CD4-positive, alpha-beta T cell (primary cell): ENCODE measurements at regions of chr10 and their contacts with region 1.

Region 1: DNA sequence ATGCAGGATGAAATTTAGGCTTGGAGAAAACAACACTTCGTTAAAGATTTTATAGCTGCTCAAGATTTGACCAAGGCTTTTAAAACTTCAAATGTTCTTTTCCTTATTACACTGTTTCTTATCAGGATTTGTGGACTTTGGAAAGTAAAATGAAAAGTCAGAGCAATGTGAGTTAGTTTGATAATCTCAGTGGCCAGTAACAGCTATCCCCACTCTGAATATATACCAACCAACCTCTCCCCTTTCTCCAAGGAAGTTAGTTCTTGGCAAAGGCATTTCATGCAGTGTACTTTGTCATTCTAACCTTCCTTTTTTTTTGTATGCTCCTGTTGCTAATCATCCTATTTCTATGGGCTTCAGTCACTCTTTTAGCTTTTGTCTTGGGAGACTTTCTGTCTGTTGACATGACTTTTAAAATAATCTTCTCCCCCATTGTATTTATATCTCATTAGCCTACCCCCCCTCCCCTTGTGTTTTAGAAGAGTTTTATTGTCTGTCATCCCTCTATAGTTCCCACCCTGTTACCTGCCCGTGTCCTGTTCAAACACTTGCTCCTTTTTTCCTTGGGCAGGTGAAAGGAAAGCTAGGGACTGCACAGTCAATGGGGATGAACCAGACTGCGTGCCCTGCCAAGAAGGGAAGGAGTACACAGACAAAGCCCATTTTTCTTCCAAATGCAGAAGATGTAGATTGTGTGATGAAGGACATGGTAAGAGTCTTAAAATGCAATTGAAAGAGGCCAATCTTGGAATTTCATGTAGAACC is 16.7 kb downstream of the FAS start:
- DNase-seq: no peak
- ATAC-seq: no peak
- H3K4me3 ChIP-seq: no peak overlapping the region
- H3K4me3 Mint-ChIP-seq: no peak overlapping the region
- H3K27ac ChIP-seq: no peak overlapping the region
- H3K27ac Mint-ChIP-seq: no peak overlapping the region
- H3K4me1 ChIP-seq: peaks cover 13% of the 10 kb centered on the region
- H3K4me1 Mint-ChIP-seq: peaks cover 17% of the 10 kb centered on the region
- H3K27me3 ChIP-seq: no peaks in the 10 kb centered on the region
- H3K27me3 Mint-ChIP-seq: no peaks in the 10 kb centered on the region
- CTCF ChIP-seq: no peak

Region 2: GRCh38 chr10:88759366-88760101 is 247.8 kb before region 1 on chr10 and contains the start of gene LIPN:
- CTCF ChIA-PET with region 1: no interaction called
- POLR2A ChIA-PET with region 1: no interaction called
- intact Hi-C with region 1: no loop called
- DNase-seq: peak in 3 of 14 experiments; percentile 23 to 71 (median 62)
- ATAC-seq: no peak
- H3K4me3 ChIP-seq: no peak within 1 kb of the TSS
- H3K4me3 Mint-ChIP-seq: no peak within 1 kb of the TSS
- H3K27ac ChIP-seq: no peak within 1 kb of the TSS
- H3K27ac Mint-ChIP-seq: no peak within 1 kb of the TSS
- H3K4me1 ChIP-seq: peaks cover 3% of the 10 kb centered on the region
- H3K4me1 Mint-ChIP-seq: peaks cover 6% of the 10 kb centered on the region
- H3K27me3 ChIP-seq: no peaks in the 10 kb centered on the region
- H3K27me3 Mint-ChIP-seq: no peaks in the 10 kb centered on the region
- CTCF ChIP-seq: no peak
- total RNA-seq, gene LIPN: not detected

Region 3: DNA sequence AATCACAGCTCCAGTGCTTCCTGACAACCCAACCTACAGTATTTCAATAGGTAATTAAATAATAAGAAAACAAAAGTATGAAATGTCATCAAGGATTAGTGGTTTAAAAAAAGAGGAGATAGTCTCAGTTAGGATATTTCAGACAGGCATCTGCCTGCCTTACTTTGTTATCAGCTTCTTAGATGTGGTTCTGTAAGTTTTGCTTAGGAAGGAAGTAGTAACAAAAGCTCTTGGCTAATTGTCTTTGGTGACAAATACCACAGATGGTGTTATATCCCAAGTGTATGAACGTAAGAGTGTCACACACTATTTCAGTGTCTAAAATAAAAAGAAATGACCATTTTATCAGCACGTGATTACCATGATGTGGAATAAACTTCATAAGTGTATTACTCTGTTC is 45.0 kb before region 1 on chr10:
- CTCF ChIA-PET with region 1: no interaction called
- POLR2A ChIA-PET with region 1: interaction called, 3 read pairs
- intact Hi-C with region 1: loop called in 1 of 2 experiments (anchors 5 kb)
- DNase-seq: peak in 3 of 14 experiments; percentile 38 to 72 (median 45)
- ATAC-seq: peak; percentile 84
- H3K4me3 ChIP-seq: no peak overlapping the region
- H3K4me3 Mint-ChIP-seq: peak overlapping the region; percentile 0
- H3K27ac ChIP-seq: no peak overlapping the region
- H3K27ac Mint-ChIP-seq: no peak overlapping the region
- H3K4me1 ChIP-seq: peaks cover 7% of the 10 kb centered on the region
- H3K4me1 Mint-ChIP-seq: peaks cover 32% of the 10 kb centered on the region
- H3K27me3 ChIP-seq: no peaks in the 10 kb centered on the region
- H3K27me3 Mint-ChIP-seq: no peaks in the 10 kb centered on the region
- CTCF ChIP-seq: no peak